ENCODE measurements at regions of chr3 and their contacts with region 1.

Region 1: GRCh38 chr3:46368569-46368968 is 2.2 kb upstream of the CCR5 start:
- DNase-seq: peak; percentile 35 to 89 (median 65)
- ATAC-seq: peak; percentile 72
- H3K4me3 ChIP-seq: no peak overlapping the region
- H3K4me3 Mint-ChIP-seq: peak overlapping the region; percentile 43
- H3K27ac ChIP-seq: peak overlapping the region in 1 of 2 experiments; percentile 82
- H3K27ac Mint-ChIP-seq: peak overlapping the region; percentile 81
- H3K4me1 ChIP-seq: peaks cover 23% of the 10 kb centered on the region
- H3K4me1 Mint-ChIP-seq: peaks cover 52% of the 10 kb centered on the region
- H3K27me3 ChIP-seq: no peaks in the 10 kb centered on the region
- H3K27me3 Mint-ChIP-seq: no peaks in the 10 kb centered on the region
- CTCF ChIP-seq: peak; percentile 53

Region 2: GRCh38 chr3:46089237-46090011 is 279.1 kb before region 1 on chr3:
- CTCF ChIA-PET with region 1: interaction called, 24 read pairs
- POLR2A ChIA-PET with region 1: no interaction called
- intact Hi-C with region 1: no loop called
- DNase-seq: peak in 1 of 9 experiments; percentile 51
- ATAC-seq: no peak
- H3K4me3 ChIP-seq: no peak overlapping the region
- H3K4me3 Mint-ChIP-seq: no peak overlapping the region
- H3K27ac ChIP-seq: no peak overlapping the region
- H3K27ac Mint-ChIP-seq: no peak overlapping the region
- H3K4me1 ChIP-seq: no peaks in the 10 kb centered on the region
- H3K4me1 Mint-ChIP-seq: peaks cover 14% of the 10 kb centered on the region
- H3K27me3 ChIP-seq: no peaks in the 10 kb centered on the region
- H3K27me3 Mint-ChIP-seq: no peaks in the 10 kb centered on the region
- CTCF ChIP-seq: no peak

Region 3: DNA sequence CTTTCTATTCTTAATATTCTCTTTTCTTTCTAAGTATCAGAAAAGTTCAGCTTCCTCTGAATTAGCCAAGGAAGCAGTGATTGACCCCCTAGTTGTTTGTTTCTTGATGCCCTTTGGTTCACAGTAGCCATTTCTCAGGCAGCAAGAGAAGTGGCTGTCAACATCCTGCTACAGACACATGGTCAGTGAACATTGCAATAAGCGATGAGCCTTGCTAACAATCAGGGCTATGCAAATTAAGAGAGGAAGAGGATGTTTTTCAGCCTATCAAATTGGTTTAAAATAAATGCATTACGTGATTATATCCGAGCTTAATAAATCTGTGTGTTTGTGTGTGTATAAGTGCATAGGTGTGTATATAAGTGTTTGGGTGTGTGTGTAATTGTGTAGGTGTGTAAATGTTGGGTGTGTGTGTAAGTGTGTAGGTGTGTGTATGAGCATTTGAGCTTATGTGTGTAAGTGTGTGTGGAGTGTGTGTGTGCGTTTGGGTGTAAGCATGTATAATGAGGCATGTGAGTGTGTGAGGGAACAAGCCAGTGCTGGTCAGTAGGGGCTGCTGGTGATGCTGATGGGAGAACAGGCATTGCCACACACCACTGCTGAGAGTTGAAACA is 263.2 kb before region 1 on chr3:
- CTCF ChIA-PET with region 1: interaction called, 24 read pairs
- POLR2A ChIA-PET with region 1: interaction called, 3 read pairs
- intact Hi-C with region 1: loop called (anchors 1 to 2 kb)
- DNase-seq: no peak
- ATAC-seq: no peak
- H3K4me3 ChIP-seq: no peak overlapping the region
- H3K4me3 Mint-ChIP-seq: no peak overlapping the region
- H3K27ac ChIP-seq: peak overlapping the region in 1 of 2 experiments; percentile 29
- H3K27ac Mint-ChIP-seq: no peak overlapping the region
- H3K4me1 ChIP-seq: peaks cover 27% of the 10 kb centered on the region
- H3K4me1 Mint-ChIP-seq: peaks cover 63% of the 10 kb centered on the region
- H3K27me3 ChIP-seq: no peaks in the 10 kb centered on the region
- H3K27me3 Mint-ChIP-seq: no peaks in the 10 kb centered on the region
- CTCF ChIP-seq: no peak

Region 4: DNA sequence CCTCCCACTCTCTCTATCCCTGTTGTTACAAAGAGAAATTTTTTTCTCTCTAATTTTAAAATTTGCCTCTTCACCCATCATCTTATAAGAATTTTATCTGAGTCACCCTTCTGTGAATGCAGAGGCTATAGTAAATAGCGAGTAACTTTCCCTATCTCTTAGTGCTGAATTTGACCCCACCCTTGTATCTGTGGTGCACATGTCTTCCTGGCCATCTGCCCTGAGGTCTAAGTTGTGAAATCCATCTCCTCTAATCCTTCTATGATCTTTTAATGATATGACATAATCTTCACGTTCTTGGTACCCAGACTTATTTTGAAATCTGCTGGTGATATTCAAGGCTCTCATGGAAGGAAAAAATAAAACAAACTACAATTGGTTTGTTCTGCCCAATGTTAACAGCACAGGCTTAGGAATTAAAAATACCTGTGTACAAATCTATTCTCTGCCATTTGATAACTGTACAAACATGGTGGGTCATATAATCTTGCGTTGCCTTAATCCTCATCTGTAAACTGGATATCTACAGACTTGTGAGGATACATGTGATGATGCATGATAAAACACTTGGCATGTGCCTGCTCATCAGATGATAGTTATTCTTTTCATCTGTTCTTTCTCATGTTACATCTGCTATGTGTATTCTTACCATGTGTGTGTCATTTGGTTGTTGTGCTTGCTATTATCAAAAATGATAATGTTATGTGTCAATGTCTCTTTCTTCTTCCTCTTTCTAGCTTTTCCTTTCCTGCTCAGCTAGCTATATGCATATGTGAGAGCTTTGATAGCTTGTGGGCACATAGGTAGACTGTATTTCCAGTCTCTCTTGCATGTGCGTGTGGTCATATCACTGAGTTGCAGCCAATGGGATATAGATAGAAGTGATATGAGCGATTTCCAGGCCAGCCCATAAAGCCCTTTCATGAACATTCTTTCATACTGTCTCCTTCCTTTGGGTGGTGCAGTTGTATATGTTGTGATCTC is 140.0 kb before region 1 on chr3:
- CTCF ChIA-PET with region 1: interaction called, 4 read pairs
- POLR2A ChIA-PET with region 1: no interaction called
- intact Hi-C with region 1: loop called in 1 of 2 experiments (anchors 5 kb)
- DNase-seq: peak in 2 of 9 experiments; percentile 22 to 38
- ATAC-seq: no peak
- H3K4me3 ChIP-seq: no peak overlapping the region
- H3K4me3 Mint-ChIP-seq: no peak overlapping the region
- H3K27ac ChIP-seq: no peak overlapping the region
- H3K27ac Mint-ChIP-seq: no peak overlapping the region
- H3K4me1 ChIP-seq: no peaks in the 10 kb centered on the region
- H3K4me1 Mint-ChIP-seq: peaks cover 7% of the 10 kb centered on the region
- H3K27me3 ChIP-seq: no peaks in the 10 kb centered on the region
- H3K27me3 Mint-ChIP-seq: no peaks in the 10 kb centered on the region
- CTCF ChIP-seq: no peak

Region 5: DNA sequence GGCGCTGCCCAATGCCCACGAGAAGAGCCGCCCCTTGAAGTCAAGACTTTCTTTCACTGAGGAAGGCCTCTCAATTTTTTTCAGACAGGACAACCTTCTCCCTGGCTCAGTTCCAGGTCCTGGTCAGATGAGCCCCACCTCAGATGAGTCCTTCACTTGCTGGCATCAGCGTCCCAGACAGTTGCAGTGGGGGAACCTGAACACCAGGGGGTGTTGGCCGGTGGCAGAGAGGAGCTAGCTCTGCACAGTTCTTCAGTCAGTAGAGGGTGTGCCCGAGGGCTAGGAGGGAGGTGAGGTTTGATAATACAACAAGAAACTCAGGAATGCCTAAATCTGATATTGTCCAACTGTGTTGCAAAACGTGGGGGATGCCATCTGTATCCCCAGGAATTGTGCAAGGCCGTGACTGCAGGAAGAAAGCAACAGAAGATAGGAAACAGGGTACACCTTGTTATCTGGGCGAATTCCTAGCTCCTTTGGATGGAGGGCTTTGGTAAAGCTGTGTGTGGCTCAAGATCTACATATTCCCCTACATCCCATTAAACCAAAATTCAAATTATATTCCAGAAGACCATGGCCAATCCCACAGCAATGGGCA is 92.0 kb before region 1 on chr3:
- CTCF ChIA-PET with region 1: interaction called, 140 read pairs
- POLR2A ChIA-PET with region 1: interaction called, 6 read pairs
- intact Hi-C with region 1: loop called (anchors 1 kb)
- DNase-seq: peak; percentile 59 to 86 (median 77)
- ATAC-seq: peak; percentile 80
- H3K4me3 ChIP-seq: no peak overlapping the region
- H3K4me3 Mint-ChIP-seq: no peak overlapping the region
- H3K27ac ChIP-seq: no peak overlapping the region
- H3K27ac Mint-ChIP-seq: no peak overlapping the region
- H3K4me1 ChIP-seq: peaks cover 15% of the 10 kb centered on the region
- H3K4me1 Mint-ChIP-seq: peaks cover 37% of the 10 kb centered on the region
- H3K27me3 ChIP-seq: no peaks in the 10 kb centered on the region
- H3K27me3 Mint-ChIP-seq: peaks cover 2% of the 10 kb centered on the region
- CTCF ChIP-seq: peak; percentile 79

Region 6: DNA sequence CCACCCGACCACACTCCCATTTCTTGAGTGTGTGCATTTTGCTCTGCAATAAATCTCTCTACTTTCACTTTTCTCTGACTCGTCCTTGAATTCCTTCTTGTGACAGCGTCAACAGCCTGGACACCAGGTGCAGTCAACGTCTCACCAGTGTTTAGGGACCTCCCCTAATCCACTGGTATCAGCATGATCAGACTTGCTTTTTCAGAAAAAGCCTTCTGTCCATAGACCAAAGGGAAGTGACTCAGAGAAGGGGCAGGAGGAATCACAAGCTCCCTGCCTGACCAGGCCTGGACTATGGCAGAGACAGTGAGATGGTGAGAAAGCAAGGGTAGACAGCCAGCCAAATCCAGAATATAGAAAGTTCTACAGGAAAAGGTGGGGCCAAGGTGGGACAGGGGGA is 17.6 kb after region 1 on chr3:
- CTCF ChIA-PET with region 1: interaction called, 22 read pairs
- POLR2A ChIA-PET with region 1: no interaction called
- intact Hi-C with region 1: no loop called
- DNase-seq: peak in 1 of 9 experiments; percentile 25
- ATAC-seq: no peak
- H3K4me3 ChIP-seq: no peak overlapping the region
- H3K4me3 Mint-ChIP-seq: no peak overlapping the region
- H3K27ac ChIP-seq: no peak overlapping the region
- H3K27ac Mint-ChIP-seq: no peak overlapping the region
- H3K4me1 ChIP-seq: peaks cover 10% of the 10 kb centered on the region
- H3K4me1 Mint-ChIP-seq: peaks cover 12% of the 10 kb centered on the region
- H3K27me3 ChIP-seq: no peaks in the 10 kb centered on the region
- H3K27me3 Mint-ChIP-seq: no peaks in the 10 kb centered on the region
- CTCF ChIP-seq: no peak

Measured in CD8-positive, alpha-beta T cell (primary cell).